A673 (cell line): ENCODE measurements at regions of chr20 and their contacts with region 1.

Region 1: DNA sequence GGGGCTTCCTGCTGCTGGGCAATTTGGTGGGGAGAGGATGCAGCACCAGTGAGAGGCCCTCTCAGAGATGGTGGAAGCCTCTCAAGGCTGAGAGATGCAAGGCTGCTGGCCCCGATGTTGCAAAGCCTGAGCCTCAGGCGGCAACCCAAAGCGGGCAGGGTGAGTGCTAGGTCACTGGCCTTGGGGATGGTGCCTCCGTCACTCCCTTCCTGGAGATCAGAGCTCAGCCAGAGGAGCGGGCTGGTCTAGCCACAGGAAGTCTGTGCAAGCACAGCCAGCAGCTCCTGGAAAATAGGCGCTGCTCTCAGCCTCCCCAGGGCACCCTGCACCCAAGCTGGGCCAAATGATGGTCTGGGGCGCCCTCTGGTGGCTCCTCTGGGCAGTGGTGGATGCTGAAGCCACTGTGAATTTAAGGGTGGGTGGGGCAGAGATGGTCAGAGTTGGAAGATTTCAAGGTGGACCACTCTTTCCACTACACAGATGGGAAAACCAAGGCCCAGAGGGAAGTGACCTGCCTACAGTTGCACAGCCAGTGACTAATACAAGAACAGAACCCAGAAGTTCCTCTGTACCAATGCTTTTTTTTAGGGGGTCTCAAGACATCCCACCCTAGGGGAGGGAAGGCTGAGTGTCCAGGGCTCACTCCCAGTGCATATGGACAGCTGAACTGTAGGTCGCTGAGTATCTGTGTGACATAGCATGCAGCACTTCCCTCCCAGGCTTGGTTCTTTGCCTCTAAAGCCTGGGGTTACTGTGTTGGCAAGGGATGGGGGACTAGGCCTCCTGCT is 20.8 kb downstream of the C20orf203 start:
- DNase-seq: peak; percentile 82
- H3K4me3 ChIP-seq: no peak overlapping the region
- H3K27ac ChIP-seq: no peak overlapping the region
- H3K4me1 ChIP-seq: no peaks in the 10 kb centered on the region
- H3K27me3 ChIP-seq: no peaks in the 10 kb centered on the region
- CTCF ChIP-seq: peak; percentile 90

Region 2: DNA sequence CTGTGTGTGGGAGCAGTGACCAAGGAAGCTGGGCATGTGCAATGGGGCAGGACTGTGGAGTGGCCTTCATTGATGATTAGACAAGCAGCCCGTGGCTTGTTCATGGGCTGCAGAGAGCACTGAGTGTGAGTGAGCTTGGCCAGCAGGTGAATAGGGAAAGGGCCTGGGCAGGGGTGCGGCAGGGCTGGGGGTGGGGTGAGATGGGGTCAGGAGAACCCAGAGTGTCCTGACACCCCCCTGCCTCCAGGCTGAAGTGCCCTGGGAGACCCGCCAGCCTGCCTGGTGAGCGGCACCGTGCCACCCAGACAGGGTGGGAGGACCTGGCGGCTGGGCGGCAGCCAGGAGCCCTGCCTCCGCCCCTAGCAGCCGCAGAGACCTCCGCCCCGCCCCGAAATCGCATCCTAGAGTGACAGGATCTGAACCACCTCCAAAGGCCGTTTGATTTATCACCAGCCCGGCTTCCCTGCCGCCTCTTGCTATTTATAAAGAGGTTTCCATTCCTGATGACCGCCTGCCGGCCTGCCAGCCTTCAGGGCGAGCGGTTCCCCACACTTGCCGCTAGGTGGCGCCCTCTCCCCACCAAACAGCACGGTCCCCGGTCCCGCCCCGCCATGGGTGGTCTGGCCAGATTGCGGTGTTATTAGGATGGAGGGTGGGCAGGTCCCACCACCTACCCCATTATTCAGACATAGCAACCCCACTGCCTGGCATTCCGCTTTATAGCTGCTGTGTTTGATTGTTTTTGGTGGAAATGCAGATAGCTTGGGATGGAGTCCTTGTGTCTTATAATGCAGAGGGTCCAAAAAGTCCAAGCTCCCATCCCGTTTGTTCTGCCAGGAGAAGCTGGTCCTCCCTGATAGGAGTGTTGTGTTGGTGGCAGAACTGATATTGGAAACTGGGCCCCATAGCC is 830.3 kb before region 1 on chr20:
- CTCF ChIA-PET with region 1: no interaction called
- POLR2A ChIA-PET with region 1: no interaction called
- intact Hi-C with region 1: loop called (anchors 10 kb)
- DNase-seq: peak; percentile 77
- H3K4me3 ChIP-seq: no peak overlapping the region
- H3K27ac ChIP-seq: no peak overlapping the region
- H3K4me1 ChIP-seq: peaks cover 9% of the 10 kb centered on the region
- H3K27me3 ChIP-seq: no peaks in the 10 kb centered on the region
- CTCF ChIP-seq: peak; percentile 99

Region 3: DNA sequence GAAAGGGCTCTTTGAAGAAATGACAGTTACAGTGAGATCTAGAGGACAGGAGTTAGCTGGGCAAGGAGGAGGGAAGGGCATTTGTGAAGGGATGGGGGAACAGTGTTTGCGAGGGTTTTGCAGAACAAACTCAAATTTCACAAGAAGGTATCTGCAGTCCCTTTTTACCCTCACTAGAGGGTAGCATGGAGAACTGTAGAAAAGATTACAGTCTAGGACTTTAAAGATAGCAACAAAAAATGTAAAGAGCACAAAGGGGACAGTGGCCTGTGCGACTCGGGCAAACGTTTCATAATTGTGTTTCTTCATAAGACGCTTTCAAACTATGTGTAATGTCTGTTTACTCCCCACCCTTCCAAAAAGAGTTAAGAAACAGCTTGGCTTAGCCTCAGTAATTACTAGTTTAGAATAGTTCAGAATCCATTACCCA is 316.0 kb before region 1 on chr20:
- CTCF ChIA-PET with region 1: no interaction called
- POLR2A ChIA-PET with region 1: no interaction called
- intact Hi-C with region 1: loop called (anchors 10 kb)
- DNase-seq: peak; percentile 49
- H3K4me3 ChIP-seq: no peak overlapping the region
- H3K27ac ChIP-seq: no peak overlapping the region
- H3K4me1 ChIP-seq: no peaks in the 10 kb centered on the region
- H3K27me3 ChIP-seq: no peaks in the 10 kb centered on the region
- CTCF ChIP-seq: peak; percentile 56

Region 4: DNA sequence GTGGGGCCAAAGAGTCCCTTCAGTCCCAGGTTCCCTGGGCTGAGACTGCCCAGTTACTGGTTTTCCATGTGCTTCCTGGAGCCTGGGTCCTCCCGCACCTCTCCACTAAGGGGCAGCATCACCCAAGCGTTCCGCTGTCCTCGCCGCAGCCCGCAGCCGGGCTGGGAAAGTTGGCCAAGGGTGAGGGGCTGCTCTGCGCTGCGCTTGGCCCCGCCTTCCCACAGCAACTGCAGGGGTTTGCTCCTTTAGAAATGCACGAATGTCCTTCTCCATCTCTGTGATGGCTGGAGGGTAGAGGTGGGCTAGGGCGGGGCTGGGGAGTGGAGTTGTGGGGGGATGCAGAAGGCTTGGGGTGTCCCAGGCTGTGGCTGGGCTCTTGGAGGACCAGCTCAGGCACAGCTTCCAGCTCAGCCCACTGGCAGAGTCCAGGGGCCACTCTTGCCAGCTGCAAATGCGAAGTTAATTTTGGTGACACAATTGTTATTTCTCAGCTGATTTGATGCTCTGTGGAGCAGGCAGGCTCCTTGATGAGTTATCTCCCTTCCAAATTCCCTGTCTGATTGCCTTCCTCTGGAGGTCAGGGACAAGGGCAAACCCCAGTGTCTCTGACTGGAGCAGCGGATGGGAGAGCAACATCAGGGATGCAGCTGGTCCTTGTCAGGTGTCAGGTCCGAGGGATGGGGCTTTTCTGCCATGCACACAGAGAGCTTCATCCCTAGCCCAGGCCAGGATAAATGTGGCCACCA is 131.0 kb before region 1 on chr20:
- CTCF ChIA-PET with region 1: interaction called, 20 read pairs
- POLR2A ChIA-PET with region 1: no interaction called
- intact Hi-C with region 1: loop called (anchors 1 kb)
- DNase-seq: peak; percentile 73
- H3K4me3 ChIP-seq: no peak overlapping the region
- H3K27ac ChIP-seq: no peak overlapping the region
- H3K4me1 ChIP-seq: no peaks in the 10 kb centered on the region
- H3K27me3 ChIP-seq: no peaks in the 10 kb centered on the region
- CTCF ChIP-seq: peak; percentile 89

Region 5: GRCh38 chr20:32619586-32619985 is 33.3 kb before region 1 on chr20:
- CTCF ChIA-PET with region 1: interaction called, 19 read pairs
- POLR2A ChIA-PET with region 1: no interaction called
- intact Hi-C with region 1: no loop called
- DNase-seq: no peak
- H3K4me3 ChIP-seq: no peak overlapping the region
- H3K27ac ChIP-seq: no peak overlapping the region
- H3K4me1 ChIP-seq: no peaks in the 10 kb centered on the region
- H3K27me3 ChIP-seq: peaks cover 6% of the 10 kb centered on the region
- CTCF ChIP-seq: no peak